Activated CD8-positive, alpha-beta T cell treated with anti-CD3 and anti-CD28 coated beads for 36 hours (primary cell): ENCODE measurements at regions of chr11 and their contacts with region 1.

Region 1: GRCh38 chr11:66677599-66678375 is at the start of gene RBM4B:
- DNase-seq: peak; percentile 98
- ATAC-seq: peak; percentile 93
- H3K4me3 Mint-ChIP-seq: peak within 1 kb of the TSS; percentile 88
- H3K27ac Mint-ChIP-seq: peak within 1 kb of the TSS; percentile 97
- H3K4me1 Mint-ChIP-seq: peaks cover 31% of the 10 kb centered on the region
- H3K27me3 Mint-ChIP-seq: no peaks in the 10 kb centered on the region
- CTCF ChIP-seq: no peak
- total RNA-seq, gene RBM4B: 10.7 to 13.1 TPM

Region 2: DNA sequence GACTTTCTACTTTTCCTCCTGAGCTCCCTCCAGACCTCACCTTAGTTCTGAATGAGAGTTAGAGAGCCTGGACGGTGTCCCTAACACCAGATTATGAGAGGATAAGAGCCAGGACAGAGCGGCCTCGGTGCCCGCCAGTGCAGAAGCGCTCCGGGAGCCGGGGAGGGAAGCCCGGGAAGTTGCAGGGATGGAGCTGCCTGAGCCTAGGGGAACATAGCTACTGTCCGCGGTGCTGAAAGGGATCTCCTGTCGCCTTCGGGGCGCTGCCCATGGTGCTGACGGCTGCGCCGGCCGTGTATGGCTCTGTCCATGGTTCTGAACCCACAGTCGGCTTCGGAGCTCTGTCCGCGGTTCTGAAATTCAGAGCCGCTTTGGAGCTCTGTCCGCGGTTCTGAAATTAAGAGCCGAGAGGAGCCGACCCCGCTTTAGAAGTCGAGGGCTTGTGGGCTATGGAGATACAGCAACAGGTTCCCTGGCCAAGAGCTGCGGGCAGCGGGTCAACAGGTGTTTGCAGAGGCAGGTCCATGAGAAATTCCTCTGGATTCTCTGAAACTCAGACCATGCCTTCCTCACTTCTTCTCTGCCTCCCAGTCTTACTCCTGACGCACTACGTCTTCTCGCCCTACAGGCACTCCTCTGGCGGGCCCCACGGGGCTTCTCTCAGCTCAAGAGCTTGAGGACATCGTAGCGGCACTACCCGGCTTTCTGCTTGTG is 256.1 kb before region 1 on chr11:
- CTCF ChIA-PET with region 1: interaction called, 12 read pairs
- POLR2A ChIA-PET with region 1: interaction called, 3 read pairs
- intact Hi-C with region 1: loop called (anchors 5 kb)
- DNase-seq: peak; percentile 92
- ATAC-seq: peak; percentile 82
- H3K4me3 Mint-ChIP-seq: no peak overlapping the region
- H3K27ac Mint-ChIP-seq: no peak overlapping the region
- H3K4me1 Mint-ChIP-seq: peaks cover 28% of the 10 kb centered on the region
- H3K27me3 Mint-ChIP-seq: peaks cover 35% of the 10 kb centered on the region
- CTCF ChIP-seq: no peak

Region 3: DNA sequence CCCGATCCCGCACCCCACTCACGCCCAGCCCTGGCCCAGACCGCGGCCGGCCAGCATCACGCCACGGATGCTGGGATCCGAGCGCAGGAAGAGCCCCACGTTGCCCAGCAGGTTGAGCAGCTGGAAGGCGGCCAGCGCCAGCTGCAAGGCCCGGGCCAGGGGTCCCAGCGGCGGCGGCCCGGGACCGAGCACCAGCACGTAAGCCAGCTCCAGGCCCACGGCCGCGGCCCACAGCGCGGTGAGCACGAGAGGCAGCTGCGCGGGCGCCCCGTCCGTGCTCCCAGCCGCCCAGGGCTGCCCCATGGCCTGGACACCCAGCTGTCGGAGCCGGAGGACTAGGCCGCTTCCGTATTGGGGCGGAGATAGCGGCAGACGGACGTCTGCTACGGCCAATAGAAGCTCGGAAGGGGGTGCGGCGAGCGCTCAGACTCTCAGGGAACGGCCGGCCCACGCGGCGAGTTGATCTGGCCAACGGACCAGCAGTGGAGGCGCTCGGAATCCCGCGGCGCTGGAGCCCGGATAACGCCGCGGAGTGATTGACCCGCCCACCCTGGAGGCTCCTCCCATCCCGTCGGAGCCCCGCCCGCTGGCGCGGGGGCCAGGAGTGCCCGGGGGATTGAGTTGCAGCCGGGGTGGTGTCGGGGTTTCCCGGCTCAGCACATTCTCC is 132.0 kb before region 1 on chr11 and contains the start of gene ZDHHC24:
- CTCF ChIA-PET with region 1: interaction called, 23 read pairs
- POLR2A ChIA-PET with region 1: interaction called, 21 read pairs
- intact Hi-C with region 1: loop called (anchors 10 kb)
- DNase-seq: peak; percentile 96
- ATAC-seq: peak; percentile 90
- H3K4me3 Mint-ChIP-seq: peak within 1 kb of the TSS; percentile 85
- H3K27ac Mint-ChIP-seq: peak within 1 kb of the TSS; percentile 83
- H3K4me1 Mint-ChIP-seq: peaks cover 17% of the 10 kb centered on the region
- H3K27me3 Mint-ChIP-seq: no peaks in the 10 kb centered on the region
- CTCF ChIP-seq: no peak
- total RNA-seq, gene ZDHHC24: 13.2 to 14.0 TPM

Region 4: DNA sequence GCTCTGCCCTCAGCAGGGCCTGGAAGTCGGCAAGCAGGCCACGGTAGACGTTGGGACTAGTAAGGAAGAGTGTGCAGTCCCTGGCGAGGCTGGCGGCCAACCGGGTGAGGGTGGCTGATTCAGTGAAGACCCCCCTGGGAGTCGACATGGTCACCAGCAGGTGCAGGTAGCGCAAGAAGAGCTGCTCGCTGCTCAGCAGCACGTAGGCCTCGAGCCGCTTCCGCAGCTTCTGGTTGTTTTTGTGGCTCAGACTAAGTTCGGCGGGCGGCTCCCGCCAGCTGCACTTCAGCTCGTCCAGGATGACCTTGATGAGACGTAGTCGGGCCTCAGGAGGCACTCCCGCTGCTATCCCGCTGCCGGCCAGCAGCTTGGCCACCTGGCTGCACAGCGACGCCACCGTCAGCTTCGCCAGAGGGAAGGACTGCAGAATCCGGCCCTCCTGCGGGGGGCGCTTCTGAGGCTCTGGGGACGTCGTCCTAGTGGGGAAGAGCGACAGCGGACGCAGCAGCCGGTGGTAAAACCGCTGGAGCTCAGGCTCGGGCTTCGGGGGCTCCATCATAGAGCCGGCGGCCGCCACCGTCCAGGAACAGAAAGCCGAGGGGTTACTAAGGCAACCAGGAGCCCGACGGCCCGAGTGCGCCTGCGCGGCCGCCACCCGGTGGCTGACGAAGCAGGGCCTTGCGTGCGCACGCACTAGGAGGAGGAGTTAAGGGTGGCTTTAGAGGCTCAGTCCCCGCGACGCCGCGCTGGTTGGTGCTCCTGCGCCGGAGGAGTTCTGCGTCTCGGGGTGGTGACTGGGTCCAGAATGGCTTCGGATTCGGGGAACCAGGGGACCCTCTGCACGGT is 85.1 kb before region 1 on chr11 and contains the starts of genes CCDC87 and CCS:
- CTCF ChIA-PET with region 1: interaction called, 67 read pairs
- POLR2A ChIA-PET with region 1: interaction called, 11 read pairs
- intact Hi-C with region 1: loop called (anchors 5 kb)
- DNase-seq: peak; percentile 99
- ATAC-seq: peak; percentile 98
- H3K4me3 Mint-ChIP-seq: peak within 1 kb of the TSS; percentile 99
- H3K27ac Mint-ChIP-seq: peak within 1 kb of the TSS; percentile 97
- H3K4me1 Mint-ChIP-seq: peaks cover 24% of the 10 kb centered on the region
- H3K27me3 Mint-ChIP-seq: no peaks in the 10 kb centered on the region
- CTCF ChIP-seq: peak; percentile 75
- total RNA-seq, gene CCDC87: 0.14 to 0.27 TPM
- total RNA-seq, gene CCS: 22.0 to 25.6 TPM

Region 5: DNA sequence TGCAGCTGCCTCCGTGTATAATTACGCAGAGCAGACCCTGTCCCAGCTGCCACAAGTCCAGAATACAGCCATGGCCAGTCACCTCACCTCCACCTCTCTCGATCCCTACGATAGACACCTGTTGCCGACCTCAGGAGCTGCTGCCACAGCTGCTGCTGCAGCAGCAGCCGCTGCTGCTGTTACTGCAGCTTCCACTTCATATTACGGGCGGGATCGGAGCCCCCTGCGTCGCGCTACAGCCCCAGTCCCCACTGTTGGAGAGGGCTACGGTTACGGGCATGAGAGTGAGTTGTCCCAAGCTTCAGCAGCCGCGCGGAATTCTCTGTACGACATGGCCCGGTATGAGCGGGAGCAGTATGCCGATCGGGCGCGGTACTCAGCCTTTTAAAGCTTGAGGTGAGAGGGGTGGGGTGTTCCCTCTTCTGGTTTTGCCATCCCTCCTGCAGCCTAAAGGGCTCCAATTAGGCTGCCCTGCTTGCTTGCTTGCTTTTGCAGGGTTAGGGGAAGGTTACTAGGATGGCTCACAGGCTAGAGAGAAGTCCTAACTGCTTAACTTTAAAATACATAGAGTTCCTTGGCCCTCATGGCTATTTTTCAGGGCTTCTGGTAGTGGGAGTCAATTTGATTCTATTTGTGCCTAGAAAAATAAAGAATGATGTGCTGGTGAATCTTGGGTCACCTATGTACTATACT is 33.9 kb before region 1 on chr11:
- CTCF ChIA-PET with region 1: interaction called, 29 read pairs
- POLR2A ChIA-PET with region 1: interaction called, 26 read pairs
- intact Hi-C with region 1: loop called (anchors 5 kb)
- DNase-seq: no peak
- ATAC-seq: no peak
- H3K4me3 Mint-ChIP-seq: peak overlapping the region; percentile 83
- H3K27ac Mint-ChIP-seq: no peak overlapping the region
- H3K4me1 Mint-ChIP-seq: peaks cover 87% of the 10 kb centered on the region
- H3K27me3 Mint-ChIP-seq: no peaks in the 10 kb centered on the region
- CTCF ChIP-seq: no peak

Region 6: DNA sequence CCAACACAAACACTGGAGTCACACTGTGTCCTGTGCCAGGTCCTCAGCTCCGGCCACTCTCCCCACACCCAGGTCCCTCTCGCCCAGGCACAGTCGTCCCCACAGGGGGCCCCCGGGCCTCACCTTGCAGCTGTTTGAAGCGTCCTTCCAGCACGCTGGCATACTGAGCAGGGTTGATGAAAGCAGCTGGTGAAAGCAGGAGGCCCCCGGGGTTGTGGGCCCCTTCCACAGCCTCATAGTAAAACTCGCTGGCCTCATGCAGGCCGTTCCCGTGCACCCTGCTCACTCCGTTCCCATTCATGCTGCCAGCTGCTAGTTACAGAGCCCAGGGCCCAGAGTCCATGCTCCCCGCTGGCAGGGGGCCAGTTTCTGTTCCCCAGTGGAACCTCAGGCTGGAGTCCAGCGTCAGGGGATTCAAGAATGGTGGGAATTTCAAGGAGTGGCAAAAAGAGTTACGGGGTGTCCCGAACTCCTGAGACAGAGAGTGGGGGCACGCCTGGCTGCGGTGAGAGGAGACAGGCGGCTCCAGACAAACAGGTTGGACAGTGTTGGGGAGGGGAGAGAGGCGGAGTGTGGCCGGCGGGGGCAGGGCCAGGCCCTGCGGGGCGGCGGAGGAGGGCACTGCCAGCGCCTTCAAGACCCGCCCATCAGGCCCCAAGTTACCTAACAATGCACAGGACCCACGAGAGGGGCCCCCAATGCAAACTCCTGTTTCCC is 40.7 kb after region 1 on chr11:
- CTCF ChIA-PET with region 1: no interaction called
- POLR2A ChIA-PET with region 1: no interaction called
- intact Hi-C with region 1: no loop called
- DNase-seq: no peak
- ATAC-seq: no peak
- H3K4me3 Mint-ChIP-seq: no peak overlapping the region
- H3K27ac Mint-ChIP-seq: no peak overlapping the region
- H3K4me1 Mint-ChIP-seq: peaks cover 8% of the 10 kb centered on the region
- H3K27me3 Mint-ChIP-seq: peaks cover 26% of the 10 kb centered on the region
- CTCF ChIP-seq: no peak

Region 7: GRCh38 chr11:66787912-66788758 is 110.3 kb after region 1 on chr11:
- CTCF ChIA-PET with region 1: no interaction called
- POLR2A ChIA-PET with region 1: no interaction called
- intact Hi-C with region 1: no loop called
- DNase-seq: no peak
- ATAC-seq: no peak
- H3K4me3 Mint-ChIP-seq: no peak overlapping the region
- H3K27ac Mint-ChIP-seq: no peak overlapping the region
- H3K4me1 Mint-ChIP-seq: no peaks in the 10 kb centered on the region
- H3K27me3 Mint-ChIP-seq: no peaks in the 10 kb centered on the region
- CTCF ChIP-seq: no peak